ENCODE measurements at regions of chr19 and their contacts with region 1.

Region 1: DNA sequence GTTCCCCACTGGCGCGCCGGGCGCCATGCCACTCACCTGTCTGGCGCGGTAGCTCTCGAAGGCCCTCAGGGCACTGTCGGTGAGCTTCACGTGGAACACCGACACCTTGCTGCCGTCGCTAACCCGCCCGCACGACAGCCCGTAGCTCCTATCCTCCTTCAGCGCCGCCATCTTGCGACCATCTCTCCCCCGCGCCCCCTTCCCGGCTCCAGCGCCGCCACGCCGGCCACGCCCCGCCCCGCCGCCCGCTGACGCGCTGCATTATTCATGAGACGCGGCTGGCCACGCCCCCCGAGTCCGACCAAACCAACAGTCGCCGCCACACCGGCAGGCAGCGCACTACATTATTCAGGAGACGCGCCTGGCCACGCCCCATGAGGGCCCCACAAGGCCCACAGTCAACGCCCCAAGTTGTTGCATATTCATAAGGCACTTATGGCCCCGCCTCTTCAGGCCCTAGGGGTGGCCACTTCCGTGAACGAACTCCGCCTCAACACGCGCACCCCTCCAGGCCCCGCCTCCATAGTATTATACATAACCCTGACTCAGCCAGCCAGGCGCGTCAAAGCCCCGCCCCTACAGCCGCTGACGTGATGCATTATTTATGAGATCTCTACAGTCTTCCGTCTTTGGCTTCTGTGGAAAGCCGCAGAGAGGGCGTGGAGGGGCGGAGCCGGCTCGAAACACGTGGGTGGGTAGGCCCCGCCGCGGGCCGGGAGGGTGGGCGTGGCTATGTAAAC is at the start of gene ELL:
- DNase-seq: peak; percentile 100
- ATAC-seq: peak; percentile 89
- H3K4me3 ChIP-seq: peak within 1 kb of the TSS; percentile 85 to 91
- H3K4me3 Mint-ChIP-seq: peak within 1 kb of the TSS; percentile 95
- H3K27ac ChIP-seq: peak within 1 kb of the TSS; percentile 92 to 96
- H3K27ac Mint-ChIP-seq: peak within 1 kb of the TSS; percentile 95
- H3K4me1 ChIP-seq: peaks cover 9% of the 10 kb centered on the region
- H3K4me1 Mint-ChIP-seq: peaks cover 26% of the 10 kb centered on the region
- H3K27me3 ChIP-seq: no peaks in the 10 kb centered on the region
- H3K27me3 Mint-ChIP-seq: no peaks in the 10 kb centered on the region
- CTCF ChIP-seq: no peak
- total RNA-seq, gene ELL: 73.4 to 75.2 TPM

Region 2: GRCh38 chr19:17470068-17470841 is 1051.8 kb before region 1 on chr19 and contains the start of gene SLC27A1:
- CTCF ChIA-PET with region 1: no interaction called
- POLR2A ChIA-PET with region 1: no interaction called
- intact Hi-C with region 1: no loop called
- DNase-seq: peak; percentile 77 to 96 (median 91)
- ATAC-seq: peak; percentile 74
- H3K4me3 ChIP-seq: peak within 1 kb of the TSS; percentile 62 to 86
- H3K4me3 Mint-ChIP-seq: peak within 1 kb of the TSS; percentile 93
- H3K27ac ChIP-seq: peak within 1 kb of the TSS; percentile 45 to 80
- H3K27ac Mint-ChIP-seq: peak within 1 kb of the TSS; percentile 89
- H3K4me1 ChIP-seq: peaks cover 22% of the 10 kb centered on the region
- H3K4me1 Mint-ChIP-seq: peaks cover 33% of the 10 kb centered on the region
- H3K27me3 ChIP-seq: no peaks in the 10 kb centered on the region
- H3K27me3 Mint-ChIP-seq: no peaks in the 10 kb centered on the region
- CTCF ChIP-seq: no peak
- total RNA-seq, gene SLC27A1: 8.1 to 9.4 TPM

Region 3: DNA sequence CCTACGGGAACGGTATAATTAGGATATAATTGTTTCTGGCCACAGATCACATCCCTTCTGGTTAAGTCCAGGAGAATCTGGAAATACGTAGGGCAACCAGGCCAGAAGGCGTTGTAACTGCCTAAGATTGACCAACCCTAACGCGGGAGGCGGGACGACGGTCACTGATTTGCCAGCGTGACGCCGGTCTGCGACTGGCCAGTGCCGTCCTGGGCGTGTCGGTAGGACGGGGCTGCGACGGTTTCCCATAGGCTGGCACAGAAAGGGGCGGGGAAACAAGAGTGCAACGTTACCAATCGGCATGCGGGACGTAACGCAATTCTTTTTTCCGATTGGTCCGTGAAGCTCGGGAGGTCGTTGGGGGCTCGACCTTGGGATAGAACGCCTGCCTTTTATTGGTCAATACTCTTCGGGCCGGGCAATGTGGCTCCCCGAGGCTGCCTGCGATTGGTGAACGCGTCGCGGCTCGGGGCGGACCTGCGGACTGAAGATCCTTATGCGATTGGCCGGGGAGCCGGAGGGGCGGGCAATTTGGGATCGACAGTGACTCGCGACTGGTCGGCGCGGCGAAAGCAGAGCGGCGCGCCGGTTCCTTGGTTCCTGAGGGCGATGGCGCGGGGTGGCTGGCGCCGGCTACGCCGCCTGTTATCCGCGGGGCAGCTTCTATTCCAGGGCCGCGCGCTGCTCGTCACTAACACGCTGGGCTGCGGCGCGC is 329.2 kb before region 1 on chr19 and contains the start of gene MPV17L2:
- CTCF ChIA-PET with region 1: no interaction called
- POLR2A ChIA-PET with region 1: no interaction called
- intact Hi-C with region 1: loop called in 1 of 2 experiments (anchors 2 kb)
- DNase-seq: peak; percentile 95 to 100 (median 97)
- ATAC-seq: peak; percentile 84
- H3K4me3 ChIP-seq: peak within 1 kb of the TSS; percentile 73
- H3K4me3 Mint-ChIP-seq: peak within 1 kb of the TSS; percentile 87
- H3K27ac ChIP-seq: peak within 1 kb of the TSS; percentile 64 to 82
- H3K27ac Mint-ChIP-seq: peak within 1 kb of the TSS; percentile 90
- H3K4me1 ChIP-seq: peaks cover 18% of the 10 kb centered on the region
- H3K4me1 Mint-ChIP-seq: peaks cover 22% of the 10 kb centered on the region
- H3K27me3 ChIP-seq: no peaks in the 10 kb centered on the region
- H3K27me3 Mint-ChIP-seq: no peaks in the 10 kb centered on the region
- CTCF ChIP-seq: no peak
- total RNA-seq, gene MPV17L2: 4.0 to 5.2 TPM

Region 4: DNA sequence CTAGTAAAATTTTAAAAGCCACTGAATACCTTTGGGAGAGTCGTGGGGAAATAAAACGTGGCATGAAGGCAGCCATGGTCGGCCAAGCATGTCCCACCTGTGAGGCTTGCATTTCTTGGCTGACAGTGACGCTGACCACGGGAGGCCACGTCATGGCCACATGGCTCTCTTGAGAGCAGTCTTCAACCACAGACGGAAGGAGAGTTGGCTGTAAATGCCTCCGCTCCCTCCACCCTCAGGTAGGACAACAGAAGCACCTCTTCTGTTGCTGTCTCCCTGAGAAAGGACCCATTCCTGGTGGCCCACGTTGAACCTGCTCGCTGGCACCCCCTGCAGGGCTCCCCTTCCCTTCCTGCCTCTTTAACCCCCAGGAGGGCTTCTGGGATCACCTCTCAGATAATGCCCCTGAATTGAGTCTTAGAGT is 114.0 kb before region 1 on chr19:
- CTCF ChIA-PET with region 1: no interaction called
- POLR2A ChIA-PET with region 1: no interaction called
- intact Hi-C with region 1: no loop called
- DNase-seq: peak in 2 of 9 experiments; percentile 33 to 40
- ATAC-seq: no peak
- H3K4me3 ChIP-seq: no peak overlapping the region
- H3K4me3 Mint-ChIP-seq: no peak overlapping the region
- H3K27ac ChIP-seq: no peak overlapping the region
- H3K27ac Mint-ChIP-seq: no peak overlapping the region
- H3K4me1 ChIP-seq: no peaks in the 10 kb centered on the region
- H3K4me1 Mint-ChIP-seq: peaks cover 2% of the 10 kb centered on the region
- H3K27me3 ChIP-seq: no peaks in the 10 kb centered on the region
- H3K27me3 Mint-ChIP-seq: peaks cover 2% of the 10 kb centered on the region
- CTCF ChIP-seq: peak; percentile 20

Region 5: DNA sequence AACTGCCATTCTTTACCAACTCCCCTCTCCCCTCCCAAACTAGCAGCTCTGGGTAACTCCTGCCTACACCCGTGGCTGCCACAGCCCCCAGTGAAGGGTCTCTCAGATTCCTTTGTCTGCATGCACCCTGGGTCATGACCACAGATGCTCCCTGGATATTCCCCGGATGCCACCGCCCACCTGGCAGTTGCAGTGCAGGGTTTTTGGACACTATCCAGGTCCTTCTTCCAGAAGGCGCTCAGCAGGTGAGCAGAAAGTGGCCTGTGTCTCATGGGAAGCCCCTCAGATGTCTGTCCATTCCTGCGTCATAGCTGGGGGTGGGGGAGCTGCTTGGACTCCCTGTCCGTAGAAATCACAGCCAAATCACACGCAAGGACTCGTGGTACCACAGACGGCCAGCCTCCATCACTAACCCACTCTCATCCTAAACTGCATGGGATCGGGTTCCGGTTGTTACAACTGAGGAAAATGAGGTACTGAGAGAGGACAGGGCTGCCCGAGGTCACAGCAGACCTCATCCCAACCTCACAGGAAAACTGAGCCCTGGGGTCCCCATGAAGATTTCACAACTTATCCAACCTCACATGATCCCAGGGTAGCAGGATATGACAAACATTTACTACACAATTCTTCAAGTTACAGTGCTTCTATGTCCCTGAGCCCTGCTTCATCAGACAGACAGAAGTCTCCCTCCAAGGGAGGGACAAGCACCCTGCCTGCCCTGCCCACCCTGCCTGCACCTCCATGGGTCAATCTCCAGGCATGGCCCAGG is 38.8 kb before region 1 on chr19:
- CTCF ChIA-PET with region 1: interaction called, 14 read pairs
- POLR2A ChIA-PET with region 1: no interaction called
- intact Hi-C with region 1: no loop called
- DNase-seq: no peak
- ATAC-seq: no peak
- H3K4me3 ChIP-seq: no peak overlapping the region
- H3K4me3 Mint-ChIP-seq: no peak overlapping the region
- H3K27ac ChIP-seq: no peak overlapping the region
- H3K27ac Mint-ChIP-seq: no peak overlapping the region
- H3K4me1 ChIP-seq: peaks cover 44% of the 10 kb centered on the region
- H3K4me1 Mint-ChIP-seq: peaks cover 70% of the 10 kb centered on the region
- H3K27me3 ChIP-seq: no peaks in the 10 kb centered on the region
- H3K27me3 Mint-ChIP-seq: no peaks in the 10 kb centered on the region
- CTCF ChIP-seq: no peak

Region 6: GRCh38 chr19:18557474-18558201 is 35.6 kb after region 1 on chr19 and contains the start of gene KXD1:
- CTCF ChIA-PET with region 1: interaction called, 11 read pairs
- POLR2A ChIA-PET with region 1: interaction called, 17 read pairs
- intact Hi-C with region 1: loop called (anchors 1 kb)
- DNase-seq: peak; percentile 92 to 100 (median 97)
- ATAC-seq: peak; percentile 99
- H3K4me3 ChIP-seq: peak within 1 kb of the TSS; percentile 98 to 99
- H3K4me3 Mint-ChIP-seq: peak within 1 kb of the TSS; percentile 91
- H3K27ac ChIP-seq: peak within 1 kb of the TSS; percentile 96 to 99
- H3K27ac Mint-ChIP-seq: peak within 1 kb of the TSS; percentile 90
- H3K4me1 ChIP-seq: peaks cover 20% of the 10 kb centered on the region
- H3K4me1 Mint-ChIP-seq: peaks cover 20% of the 10 kb centered on the region
- H3K27me3 ChIP-seq: no peaks in the 10 kb centered on the region
- H3K27me3 Mint-ChIP-seq: no peaks in the 10 kb centered on the region
- CTCF ChIP-seq: no peak
- total RNA-seq, gene KXD1: 64.1 to 76.1 TPM

Region 7: DNA sequence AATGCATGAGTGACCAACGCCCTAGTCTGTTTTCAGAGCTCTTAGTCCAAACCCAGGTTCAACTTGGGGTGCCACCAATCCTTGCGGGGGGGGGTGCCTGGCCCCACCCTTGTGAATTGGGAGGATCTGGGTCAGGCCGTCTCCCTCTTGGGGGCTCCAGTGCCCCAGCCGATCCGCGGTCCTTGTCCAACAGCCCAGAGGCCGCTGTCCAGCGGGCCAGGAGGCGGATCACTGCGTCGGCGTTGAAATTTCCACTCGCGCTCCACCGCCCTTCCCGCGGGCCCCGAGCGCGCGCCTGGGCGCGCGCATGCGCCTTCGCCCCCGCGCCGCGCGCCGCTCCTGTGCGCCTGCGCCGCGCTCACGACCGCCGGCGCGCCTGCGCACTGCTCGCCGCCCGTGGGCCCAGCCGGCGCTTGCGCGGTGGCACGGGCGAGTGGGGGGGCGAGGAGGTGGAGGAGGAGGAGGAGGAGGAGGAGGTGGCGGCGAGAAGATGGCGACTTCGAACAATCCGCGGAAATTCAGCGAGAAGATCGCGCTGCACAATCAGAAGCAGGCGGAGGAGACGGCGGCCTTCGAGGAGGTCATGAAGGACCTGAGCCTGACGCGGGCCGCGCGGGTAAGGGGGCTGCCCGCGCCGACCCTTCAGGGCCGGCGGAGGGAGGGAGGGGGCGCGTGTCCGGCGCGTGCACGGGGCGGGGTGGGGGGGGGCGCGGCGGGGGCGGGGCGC is 161.3 kb after region 1 on chr19 and contains the start of gene CRTC1:
- CTCF ChIA-PET with region 1: no interaction called
- POLR2A ChIA-PET with region 1: no interaction called
- intact Hi-C with region 1: loop called (anchors 1 kb)
- DNase-seq: peak; percentile 90 to 97 (median 95)
- ATAC-seq: peak; percentile 90
- H3K4me3 ChIP-seq: peak within 1 kb of the TSS; percentile 63 to 91
- H3K4me3 Mint-ChIP-seq: peak within 1 kb of the TSS; percentile 87
- H3K27ac ChIP-seq: peak within 1 kb of the TSS; percentile 65 to 67
- H3K27ac Mint-ChIP-seq: peak within 1 kb of the TSS; percentile 82
- H3K4me1 ChIP-seq: peaks cover 20% of the 10 kb centered on the region
- H3K4me1 Mint-ChIP-seq: peaks cover 33% of the 10 kb centered on the region
- H3K27me3 ChIP-seq: no peaks in the 10 kb centered on the region
- H3K27me3 Mint-ChIP-seq: no peaks in the 10 kb centered on the region
- CTCF ChIP-seq: no peak
- total RNA-seq, gene CRTC1: 7.1 to 7.5 TPM

Region 8: GRCh38 chr19:18919086-18919899 is 397.2 kb after region 1 on chr19 and contains the starts of genes COPE and DDX49:
- CTCF ChIA-PET with region 1: interaction called, 4 read pairs
- POLR2A ChIA-PET with region 1: interaction called, 6 read pairs
- intact Hi-C with region 1: loop called (anchors 1 kb)
- DNase-seq: peak; percentile 92 to 100 (median 98)
- ATAC-seq: peak; percentile 93
- H3K4me3 ChIP-seq: peak within 1 kb of the TSS; percentile 92 to 94
- H3K4me3 Mint-ChIP-seq: peak within 1 kb of the TSS; percentile 93
- H3K27ac ChIP-seq: peak within 1 kb of the TSS; percentile 96 to 97
- H3K27ac Mint-ChIP-seq: peak within 1 kb of the TSS; percentile 94
- H3K4me1 ChIP-seq: peaks cover 30% of the 10 kb centered on the region
- H3K4me1 Mint-ChIP-seq: peaks cover 43% of the 10 kb centered on the region
- H3K27me3 ChIP-seq: no peaks in the 10 kb centered on the region
- H3K27me3 Mint-ChIP-seq: no peaks in the 10 kb centered on the region
- CTCF ChIP-seq: no peak
- total RNA-seq, gene COPE: 207 to 211 TPM
- total RNA-seq, gene DDX49: 67.1 to 72.8 TPM